Vagina (tissue), 2 donors: ENCODE measurements at regions of chr17 and their contacts with region 1.

Region 1: DNA sequence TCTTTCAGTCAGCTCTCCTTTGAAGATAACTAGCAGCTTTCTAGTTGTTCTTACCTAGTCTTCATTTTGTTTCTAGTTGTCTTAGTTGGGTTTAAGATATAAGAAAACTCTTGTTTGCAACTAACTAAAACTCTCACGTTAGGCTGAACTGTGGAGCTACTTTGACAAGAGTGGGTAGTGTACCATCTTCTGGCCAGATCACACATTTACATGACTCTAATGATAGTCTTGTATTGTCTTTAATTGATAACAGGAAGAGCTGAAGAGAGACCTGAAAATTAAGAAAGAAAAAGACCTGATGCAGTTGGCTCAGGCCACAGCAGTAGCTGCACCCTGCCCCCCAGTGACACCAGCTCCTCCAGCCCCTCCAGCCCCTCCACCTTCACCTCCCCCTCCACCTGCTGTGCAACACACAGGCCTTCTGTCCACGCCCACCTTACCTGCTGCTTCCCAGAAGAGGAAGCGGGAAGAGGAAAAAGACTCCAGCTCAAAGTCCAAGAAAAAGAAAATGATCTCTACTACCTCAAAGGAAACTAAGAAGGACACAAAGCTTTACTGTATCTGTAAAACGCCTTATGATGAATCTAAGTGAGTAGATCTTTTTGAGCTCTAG is 36.9 kb downstream of the C17orf58 start:
- DNase-seq: no peak
- H3K4me3 ChIP-seq: no peak overlapping the region
- H3K27ac ChIP-seq: no peak overlapping the region
- H3K4me1 ChIP-seq: no peaks in the 10 kb centered on the region
- H3K27me3 ChIP-seq: no peaks in the 10 kb centered on the region
- CTCF ChIP-seq: no peak
- POLR2A ChIP-seq: no peak

Region 2: GRCh38 chr17:68205251-68205807 is 245.9 kb after region 1 on chr17:
- intact Hi-C with region 1: loop called (anchors 10 kb)
- DNase-seq: peak in 1 of 2 donors; percentile 88
- H3K4me3 ChIP-seq: peak overlapping the region; percentile 72 to 95
- H3K27ac ChIP-seq: peak overlapping the region; percentile 92
- H3K4me1 ChIP-seq: peaks cover 24% of the 10 kb centered on the region
- H3K27me3 ChIP-seq: no peaks in the 10 kb centered on the region
- CTCF ChIP-seq: peak; percentile 43 to 86 (median 85)
- POLR2A ChIP-seq: peak in 1 of 2 donors; percentile 64